ENCODE measurements at regions of chr6 and their contacts with region 1.

Region 1: GRCh38 chr6:28586962-28587745 is 61.5 kb downstream of the GPX5 start:
- DNase-seq: no peak
- ATAC-seq: peak; percentile 72
- H3K4me3 ChIP-seq: peak overlapping the region; percentile 59 to 74
- H3K27ac ChIP-seq: peak overlapping the region; percentile 81
- H3K4me1 ChIP-seq: peaks cover 15% of the 10 kb centered on the region
- H3K27me3 ChIP-seq: peaks cover 5% of the 10 kb centered on the region; the same call in 1 of the 2 replicates
- CTCF ChIP-seq: no peak

Region 2: DNA sequence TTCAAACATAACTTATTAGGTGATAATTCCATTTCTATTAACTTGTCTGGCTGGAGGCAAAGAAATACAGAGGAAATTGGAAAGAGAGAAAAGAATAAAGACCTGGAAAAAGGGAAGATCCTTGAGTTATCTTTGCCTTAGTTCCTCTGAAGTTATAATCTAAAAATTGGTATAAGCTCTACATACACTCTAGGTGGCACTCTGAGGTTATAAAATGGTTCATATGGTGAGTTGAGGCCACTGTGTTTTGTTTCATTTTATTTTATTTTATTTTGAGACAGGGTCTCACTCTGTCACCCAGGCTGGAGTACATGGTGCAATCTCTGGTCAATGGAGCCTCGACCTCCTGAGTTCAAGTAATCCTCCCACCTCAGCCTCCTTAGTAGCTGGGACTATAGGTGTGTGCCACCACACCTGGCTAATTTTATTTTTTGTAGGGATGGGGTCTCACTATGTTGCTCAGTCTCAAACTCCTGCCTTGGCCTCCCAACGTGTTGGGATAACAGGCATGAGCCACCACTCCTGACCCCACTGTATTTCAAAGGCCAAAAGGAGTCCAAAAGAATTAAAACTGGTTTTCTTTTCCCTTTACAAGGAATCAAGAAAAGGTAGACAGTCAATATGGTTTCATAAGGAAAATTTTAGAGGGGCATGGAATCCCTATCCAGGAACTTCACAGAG is 90.9 kb before region 1 on chr6:
- CTCF ChIA-PET with region 1: interaction called, 3 read pairs
- POLR2A ChIA-PET with region 1: no interaction called
- in situ Hi-C with region 1: no loop called
- intact Hi-C with region 1: loop called (anchors 5 kb)
- DNase-seq: no peak
- ATAC-seq: no peak
- H3K4me3 ChIP-seq: no peak overlapping the region
- H3K27ac ChIP-seq: no peak overlapping the region
- H3K4me1 ChIP-seq: no peaks in the 10 kb centered on the region
- H3K27me3 ChIP-seq: peaks cover 2% of the 10 kb centered on the region; the same call in 1 of the 2 replicates
- CTCF ChIP-seq: peak; percentile 56

Region 3: GRCh38 chr6:28525496-28526039 is 61.6 kb before region 1 on chr6 and contains the start of gene GPX5:
- CTCF ChIA-PET with region 1: no interaction called
- POLR2A ChIA-PET with region 1: no interaction called
- in situ Hi-C with region 1: no loop called
- intact Hi-C with region 1: no loop called
- DNase-seq: no peak
- ATAC-seq: no peak
- H3K4me3 ChIP-seq: no peak within 1 kb of the TSS
- H3K27ac ChIP-seq: no peak within 1 kb of the TSS
- H3K4me1 ChIP-seq: no peaks in the 10 kb centered on the region
- H3K27me3 ChIP-seq: peaks cover 25% of the 10 kb centered on the region
- CTCF ChIP-seq: no peak
- total RNA-seq, gene GPX5: not detected

Region 4: GRCh38 chr6:28802417-28803336 is 215.5 kb after region 1 on chr6:
- CTCF ChIA-PET with region 1: interaction called, 10 read pairs
- POLR2A ChIA-PET with region 1: no interaction called
- in situ Hi-C with region 1: no loop called
- intact Hi-C with region 1: no loop called
- DNase-seq: peak; percentile 97
- ATAC-seq: peak; percentile 98
- H3K4me3 ChIP-seq: peak overlapping the region; percentile 61 to 92
- H3K27ac ChIP-seq: peak overlapping the region; percentile 41; the same call in 1 of the 2 replicates
- H3K4me1 ChIP-seq: peaks cover 17% of the 10 kb centered on the region
- H3K27me3 ChIP-seq: no peaks in the 10 kb centered on the region
- CTCF ChIP-seq: no peak

Measured in Panc1 (cell line).